Activated CD4-positive, alpha-beta memory T cell treated with anti-CD3 and anti-CD28 coated beads for 36 hours (primary cell): ENCODE measurements at regions of chr20 and their contacts with region 1.

Region 1: DNA sequence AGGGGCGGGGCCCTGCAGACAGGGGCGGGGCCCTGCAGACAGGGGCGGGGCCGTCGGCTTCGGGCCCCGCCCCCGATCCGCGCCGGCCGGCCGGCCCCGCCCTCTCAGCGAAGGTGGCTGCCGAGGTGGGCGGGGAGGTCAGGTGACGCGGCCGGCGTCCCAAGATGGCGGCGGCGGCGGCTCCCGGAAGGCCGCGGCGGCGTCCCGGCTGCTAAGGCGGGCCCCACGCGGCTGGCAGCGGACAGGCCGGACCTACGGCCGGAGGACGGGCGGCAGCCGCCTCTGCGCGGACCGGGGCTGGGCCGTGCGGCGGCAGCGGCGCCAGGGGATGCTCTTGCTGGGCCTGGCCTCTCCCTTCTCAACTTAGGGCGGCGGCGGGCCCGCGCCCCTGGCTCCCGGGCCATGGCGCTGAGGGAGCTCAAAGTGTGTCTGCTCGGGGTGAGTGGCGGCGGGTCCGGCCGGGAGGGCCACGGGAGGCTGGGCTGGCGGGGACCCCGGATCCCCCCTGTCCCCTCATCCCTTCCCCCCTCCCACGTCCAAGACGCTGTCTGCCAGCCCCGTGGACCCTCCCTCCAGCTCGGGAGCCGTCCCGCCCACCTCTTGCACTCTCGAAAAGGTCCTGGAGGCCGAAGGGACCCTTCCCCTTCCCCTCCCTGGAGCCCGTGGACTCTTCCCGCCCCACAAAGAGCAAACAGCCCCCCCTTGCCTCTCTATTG is at the start of gene RAB22A:
- DNase-seq: peak; percentile 85
- H3K4me3 Mint-ChIP-seq: peak within 1 kb of the TSS; percentile 90
- H3K27ac Mint-ChIP-seq: peak within 1 kb of the TSS; percentile 89
- H3K4me1 Mint-ChIP-seq: peaks cover 73% of the 10 kb centered on the region
- H3K27me3 Mint-ChIP-seq: no peaks in the 10 kb centered on the region
- total RNA-seq, gene RAB22A: 10.5 to 12.0 TPM

Region 2: GRCh38 chr20:57398231-57398821 is 911.4 kb before region 1 on chr20:
- CTCF ChIA-PET with region 1: no interaction called
- POLR2A ChIA-PET with region 1: no interaction called
- intact Hi-C with region 1: loop called (anchors 5 kb)
- DNase-seq: peak; percentile 93
- H3K4me3 Mint-ChIP-seq: peak overlapping the region; percentile 78
- H3K27ac Mint-ChIP-seq: peak overlapping the region; percentile 96
- H3K4me1 Mint-ChIP-seq: peaks cover 88% of the 10 kb centered on the region
- H3K27me3 Mint-ChIP-seq: no peaks in the 10 kb centered on the region

Region 3: GRCh38 chr20:58188527-58188926 is 121.2 kb before region 1 on chr20:
- CTCF ChIA-PET with region 1: no interaction called
- POLR2A ChIA-PET with region 1: no interaction called
- intact Hi-C with region 1: no loop called
- DNase-seq: no peak
- H3K4me3 Mint-ChIP-seq: no peak overlapping the region
- H3K27ac Mint-ChIP-seq: no peak overlapping the region
- H3K4me1 Mint-ChIP-seq: no peaks in the 10 kb centered on the region
- H3K27me3 Mint-ChIP-seq: peaks cover 14% of the 10 kb centered on the region

Region 4: DNA sequence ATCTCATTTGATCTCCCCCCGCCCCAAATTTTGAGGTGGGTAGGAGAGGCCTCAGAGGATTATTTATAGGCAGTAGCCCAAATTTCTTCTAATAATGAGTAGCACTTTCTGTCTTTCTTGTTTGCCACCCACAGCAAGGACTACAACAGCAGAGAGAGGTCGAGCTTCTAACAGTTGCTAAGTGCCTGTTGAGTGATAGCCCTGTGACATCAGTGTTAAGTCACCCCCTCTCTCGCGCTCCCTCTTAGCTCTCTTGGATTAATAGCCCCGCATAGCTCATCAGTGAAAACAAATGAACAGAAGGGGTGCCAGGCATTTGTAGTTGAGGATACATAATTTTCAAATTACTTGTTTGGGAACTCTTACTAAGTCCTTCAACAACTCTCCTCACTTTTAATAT is 84.8 kb before region 1 on chr20:
- CTCF ChIA-PET with region 1: no interaction called
- POLR2A ChIA-PET with region 1: no interaction called
- intact Hi-C with region 1: loop called (anchors 5 kb)
- DNase-seq: no peak
- H3K4me3 Mint-ChIP-seq: no peak overlapping the region
- H3K27ac Mint-ChIP-seq: no peak overlapping the region
- H3K4me1 Mint-ChIP-seq: peaks cover 25% of the 10 kb centered on the region
- H3K27me3 Mint-ChIP-seq: peaks cover 56% of the 10 kb centered on the region

Region 5: GRCh38 chr20:58256842-58257241 is 52.9 kb before region 1 on chr20:
- CTCF ChIA-PET with region 1: interaction called, 3 read pairs
- POLR2A ChIA-PET with region 1: no interaction called
- intact Hi-C with region 1: loop called (anchors 5 kb)
- DNase-seq: no peak
- H3K4me3 Mint-ChIP-seq: no peak overlapping the region
- H3K27ac Mint-ChIP-seq: no peak overlapping the region
- H3K4me1 Mint-ChIP-seq: peaks cover 22% of the 10 kb centered on the region
- H3K27me3 Mint-ChIP-seq: no peaks in the 10 kb centered on the region

Region 6: DNA sequence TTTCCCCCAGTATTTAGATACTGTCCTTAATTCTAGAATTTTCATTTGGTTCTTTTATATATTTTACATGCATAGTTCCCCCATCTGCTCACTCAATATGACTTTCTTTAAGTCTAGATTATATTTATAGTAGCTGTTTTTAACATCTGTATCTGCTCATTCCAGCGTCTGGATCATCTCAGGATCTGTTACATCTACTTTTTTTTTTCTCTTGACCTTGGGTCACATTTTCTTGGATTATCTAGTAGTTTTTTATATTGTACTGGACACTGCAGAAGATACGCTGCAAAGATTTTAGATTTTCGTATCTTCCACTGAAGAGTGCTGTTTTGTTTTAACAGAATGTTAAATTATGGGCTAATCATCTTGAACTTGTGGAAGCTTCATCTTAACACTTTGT is 20.5 kb after region 1 on chr20:
- CTCF ChIA-PET with region 1: no interaction called
- POLR2A ChIA-PET with region 1: no interaction called
- intact Hi-C with region 1: no loop called
- DNase-seq: no peak
- H3K4me3 Mint-ChIP-seq: no peak overlapping the region
- H3K27ac Mint-ChIP-seq: no peak overlapping the region
- H3K4me1 Mint-ChIP-seq: peaks cover 35% of the 10 kb centered on the region
- H3K27me3 Mint-ChIP-seq: no peaks in the 10 kb centered on the region

Region 7: GRCh38 chr20:58352468-58352867 is 42.7 kb after region 1 on chr20:
- CTCF ChIA-PET with region 1: no interaction called
- POLR2A ChIA-PET with region 1: interaction called, 5 read pairs
- intact Hi-C with region 1: loop called (anchors 1 kb)
- DNase-seq: peak; percentile 76
- H3K4me3 Mint-ChIP-seq: no peak overlapping the region
- H3K27ac Mint-ChIP-seq: peak overlapping the region; percentile 52
- H3K4me1 Mint-ChIP-seq: peaks cover 13% of the 10 kb centered on the region
- H3K27me3 Mint-ChIP-seq: no peaks in the 10 kb centered on the region

Region 8: DNA sequence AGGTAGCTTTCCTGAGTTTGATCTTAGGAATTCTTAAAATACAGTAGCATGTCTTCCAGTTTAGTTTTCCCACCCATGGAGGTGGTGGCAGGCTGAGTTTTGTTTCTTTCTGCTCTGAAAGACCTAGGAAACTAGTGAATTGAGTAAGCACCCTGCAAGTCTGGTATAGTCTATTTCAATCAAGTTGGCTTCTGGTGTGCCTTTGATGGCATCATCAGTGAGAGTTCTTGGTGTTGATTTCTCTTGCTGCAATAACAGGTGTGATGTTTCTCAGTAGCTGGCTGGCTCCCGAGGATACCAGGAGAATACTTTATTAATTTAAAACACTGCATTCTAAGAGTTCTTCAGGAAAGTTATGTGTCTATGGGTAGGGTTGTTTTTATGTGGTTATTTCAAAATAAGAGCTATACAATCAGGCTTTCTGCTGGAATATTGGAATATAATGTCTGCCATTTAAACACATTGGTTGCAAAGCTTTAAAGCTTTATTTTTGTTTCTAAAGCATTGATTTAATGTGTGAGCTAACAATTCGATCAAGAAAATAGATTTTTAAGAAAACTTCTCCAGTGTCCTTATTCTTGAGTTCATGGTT is 98.3 kb after region 1 on chr20:
- CTCF ChIA-PET with region 1: no interaction called
- POLR2A ChIA-PET with region 1: no interaction called
- intact Hi-C with region 1: loop called (anchors 2 kb)
- DNase-seq: peak; percentile 37
- H3K4me3 Mint-ChIP-seq: peak overlapping the region; percentile 12
- H3K27ac Mint-ChIP-seq: peak overlapping the region; percentile 79
- H3K4me1 Mint-ChIP-seq: peaks cover 36% of the 10 kb centered on the region
- H3K27me3 Mint-ChIP-seq: no peaks in the 10 kb centered on the region

Region 9: GRCh38 chr20:59165891-59166709 is 856.4 kb after region 1 on chr20:
- CTCF ChIA-PET with region 1: no interaction called
- POLR2A ChIA-PET with region 1: no interaction called
- intact Hi-C with region 1: loop called (anchors 5 kb)
- DNase-seq: peak; percentile 65
- H3K4me3 Mint-ChIP-seq: peak overlapping the region; percentile 77
- H3K27ac Mint-ChIP-seq: peak overlapping the region; percentile 96
- H3K4me1 Mint-ChIP-seq: peaks cover 77% of the 10 kb centered on the region
- H3K27me3 Mint-ChIP-seq: no peaks in the 10 kb centered on the region